BJ (cell line): ENCODE measurements at regions of chr7 and their contacts with region 1.

Region 1: DNA sequence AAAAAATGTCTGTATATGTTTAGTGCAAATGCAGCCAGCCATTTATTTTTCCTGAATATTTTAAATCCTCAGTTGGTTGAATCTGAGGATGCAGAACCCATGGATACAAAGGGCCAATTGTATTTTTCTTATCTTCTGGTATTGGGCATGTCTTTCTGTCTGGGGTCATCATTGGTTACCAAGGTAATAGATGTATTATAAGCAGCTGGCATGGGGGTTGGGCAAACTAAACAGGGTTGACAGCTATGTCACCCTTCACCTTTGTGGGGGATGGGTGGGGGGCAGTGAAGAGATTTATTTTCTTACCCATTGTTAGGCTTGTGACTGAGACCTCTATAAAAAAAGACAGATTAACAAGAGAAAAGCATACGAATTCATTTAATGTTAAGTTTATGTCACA is 38.8 kb downstream of the CDHR3 start:
- DNase-seq: no peak
- H3K4me3 ChIP-seq: no peak overlapping the region
- H3K27me3 ChIP-seq: peaks cover 1% of the 10 kb centered on the region; the same call in 1 of the 2 replicates
- CTCF ChIP-seq: no peak

Region 2: GRCh38 chr7:105487579-105488571 is 514.0 kb before region 1 on chr7:
- CTCF ChIA-PET with region 1: no interaction called
- POLR2A ChIA-PET with region 1: no interaction called
- DNase-seq: peak; percentile 69
- H3K4me3 ChIP-seq: no peak overlapping the region
- H3K27me3 ChIP-seq: no peaks in the 10 kb centered on the region
- CTCF ChIP-seq: peak; percentile 51

Region 3: GRCh38 chr7:105940104-105940503 is 61.8 kb before region 1 on chr7:
- CTCF ChIA-PET with region 1: no interaction called
- POLR2A ChIA-PET with region 1: interaction called, 11 read pairs
- DNase-seq: no peak
- H3K4me3 ChIP-seq: no peak overlapping the region
- H3K27me3 ChIP-seq: no peaks in the 10 kb centered on the region; the same call in 1 of the 2 replicates
- CTCF ChIP-seq: no peak